MCF 10A (cell line): ENCODE measurements at regions of chr2 and their contacts with region 1.

Region 1: DNA sequence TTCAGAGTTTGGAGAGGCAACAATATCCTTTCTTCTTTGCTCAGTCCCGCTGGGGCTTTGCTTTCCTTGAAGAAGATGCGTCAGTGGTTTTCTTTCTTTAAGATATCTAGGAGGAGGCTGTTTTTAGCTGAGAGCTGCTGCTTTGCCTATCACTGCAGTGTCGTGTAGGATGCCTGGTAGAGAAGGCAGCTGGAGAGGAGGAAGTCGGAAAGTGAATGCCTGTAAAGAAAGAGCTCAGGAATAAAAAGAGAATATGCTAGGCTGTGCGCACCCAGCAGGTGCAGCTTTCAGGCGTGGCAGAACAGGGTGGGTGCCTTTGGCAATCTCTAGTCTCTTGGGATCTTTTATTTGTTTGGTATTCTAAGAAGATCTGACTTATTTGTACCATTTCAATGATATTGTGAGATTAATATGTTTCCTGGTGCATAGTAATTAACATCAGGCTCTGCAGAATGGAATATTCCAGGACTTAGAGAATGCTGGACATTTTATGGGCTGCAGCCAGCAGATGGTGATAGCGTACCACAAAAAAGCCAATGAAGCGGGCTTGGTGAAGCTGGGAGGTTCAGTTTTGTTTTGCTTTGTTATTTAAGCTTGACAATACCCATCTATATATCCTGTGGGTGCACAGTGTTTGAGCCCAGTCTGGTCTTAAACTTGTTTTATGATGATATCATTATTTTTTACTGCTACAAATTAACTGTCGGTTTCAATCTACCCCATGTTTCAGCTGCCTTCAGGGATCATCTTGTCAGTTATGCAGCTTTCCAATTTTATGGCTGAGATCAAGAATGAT is 34.9 kb downstream of the CAVIN2 start:
- DNase-seq: peak; percentile 72
- H3K4me3 Mint-ChIP-seq: no peak overlapping the region
- H3K27ac Mint-ChIP-seq: no peak overlapping the region
- H3K4me1 Mint-ChIP-seq: no peaks in the 10 kb centered on the region
- H3K27me3 Mint-ChIP-seq: no peaks in the 10 kb centered on the region
- CTCF ChIP-seq: peak; percentile 76

Region 2: DNA sequence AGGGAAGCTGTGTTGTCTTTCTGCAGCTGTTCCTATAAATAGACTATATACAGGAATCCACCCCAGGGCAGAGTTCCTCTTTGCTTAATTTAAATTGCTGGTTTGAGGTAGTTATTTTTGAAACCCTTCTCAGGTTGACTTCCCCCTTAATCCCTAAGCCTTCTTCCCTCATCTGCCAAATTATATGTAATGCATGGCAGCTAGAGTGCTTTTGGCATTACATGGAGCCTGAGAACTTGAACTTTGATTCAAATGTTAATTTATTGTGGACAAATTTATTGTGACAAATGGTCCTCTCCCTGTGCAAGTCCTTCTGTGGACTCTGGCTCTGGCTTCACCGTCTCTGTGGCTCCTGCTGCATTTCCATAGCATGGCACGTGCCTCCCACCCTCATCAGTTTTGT is 537.6 kb before region 1 on chr2:
- CTCF ChIA-PET with region 1: no interaction called
- POLR2A ChIA-PET with region 1: no interaction called
- intact Hi-C with region 1: no loop called
- DNase-seq: no peak
- H3K4me3 Mint-ChIP-seq: no peak overlapping the region
- H3K27ac Mint-ChIP-seq: peak overlapping the region; percentile 19
- H3K4me1 Mint-ChIP-seq: peaks cover 12% of the 10 kb centered on the region
- H3K27me3 Mint-ChIP-seq: no peaks in the 10 kb centered on the region
- CTCF ChIP-seq: no peak

Region 3: DNA sequence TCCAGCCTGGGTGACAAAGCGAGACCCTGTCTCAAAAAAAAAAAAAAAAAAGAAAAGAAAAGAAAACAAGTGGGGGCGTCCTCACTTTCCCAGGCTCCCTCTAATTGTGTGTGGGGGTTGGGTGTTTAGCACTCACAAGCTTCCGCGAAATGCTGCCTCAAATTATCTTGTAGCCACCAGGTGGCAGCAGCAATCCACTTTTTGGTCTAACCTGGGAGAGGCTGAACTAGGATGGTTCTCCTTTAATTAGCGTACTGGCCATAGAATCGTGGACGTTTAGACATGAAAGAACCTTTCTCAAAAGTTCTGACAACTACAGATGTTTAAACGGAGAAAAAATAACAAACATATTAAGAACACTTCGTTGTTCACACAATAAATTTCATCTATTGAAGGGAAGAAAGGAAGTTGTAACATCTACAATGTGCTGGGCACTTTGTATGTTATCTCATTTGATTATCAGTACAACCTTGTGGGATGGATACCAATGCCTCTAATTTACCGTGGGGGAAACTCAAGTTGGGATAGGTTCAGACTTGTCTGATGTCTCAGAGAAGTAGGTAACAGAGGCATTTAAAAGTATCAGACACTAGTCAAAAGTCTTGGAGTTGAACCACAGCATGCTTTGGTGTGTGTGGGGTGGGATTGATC is 256.8 kb before region 1 on chr2:
- CTCF ChIA-PET with region 1: interaction called, 45 read pairs
- POLR2A ChIA-PET with region 1: interaction called, 3 read pairs
- intact Hi-C with region 1: loop called (anchors 1 kb)
- DNase-seq: peak; percentile 89
- H3K4me3 Mint-ChIP-seq: no peak overlapping the region
- H3K27ac Mint-ChIP-seq: no peak overlapping the region
- H3K4me1 Mint-ChIP-seq: peaks cover 5% of the 10 kb centered on the region
- H3K27me3 Mint-ChIP-seq: no peaks in the 10 kb centered on the region
- CTCF ChIP-seq: peak; percentile 72

Region 4: DNA sequence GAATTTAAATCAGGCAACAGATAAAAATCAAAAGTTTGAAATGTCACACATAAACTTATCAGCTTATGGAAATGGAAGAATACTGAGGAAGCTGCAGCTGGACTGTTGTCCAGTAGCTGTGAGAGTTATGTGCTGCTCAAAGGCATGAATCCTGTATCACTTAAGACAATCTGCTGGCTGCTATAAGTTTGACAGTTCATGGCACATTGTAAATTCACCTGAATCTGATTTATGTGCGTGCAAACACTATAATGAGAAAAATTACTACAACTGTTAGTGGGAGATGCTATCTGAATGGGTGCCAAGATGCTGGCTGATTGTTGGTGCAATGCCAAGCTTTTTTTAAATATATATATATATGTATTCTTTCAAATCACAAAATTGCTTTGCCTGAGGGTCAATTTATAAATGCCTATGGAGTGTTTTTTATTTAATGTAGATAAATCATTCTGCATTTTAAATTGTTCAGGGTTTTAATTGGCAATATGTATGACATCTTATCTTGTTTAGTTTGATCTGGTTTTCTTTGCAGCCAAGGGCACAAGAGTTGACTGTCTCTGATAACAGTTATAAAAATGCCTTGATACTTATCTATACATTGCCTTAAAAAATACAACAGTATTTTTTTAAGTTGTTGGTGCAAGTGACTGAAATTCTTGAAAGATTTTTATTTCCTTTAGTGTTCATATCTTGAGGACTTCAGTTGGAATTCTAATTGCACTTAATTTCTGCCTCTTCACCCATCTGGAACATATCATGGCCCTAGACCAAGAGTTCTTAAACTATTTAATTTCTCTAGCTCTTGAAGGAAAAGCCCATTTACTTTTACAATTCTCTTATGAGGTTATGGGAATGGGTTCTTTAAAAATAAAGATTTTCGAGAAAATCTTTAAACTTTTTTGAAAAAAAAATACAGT is 13.8 kb before region 1 on chr2:
- CTCF ChIA-PET with region 1: interaction called, 18 read pairs
- POLR2A ChIA-PET with region 1: no interaction called
- intact Hi-C with region 1: no loop called
- DNase-seq: no peak
- H3K4me3 Mint-ChIP-seq: no peak overlapping the region
- H3K27ac Mint-ChIP-seq: no peak overlapping the region
- H3K4me1 Mint-ChIP-seq: no peaks in the 10 kb centered on the region
- H3K27me3 Mint-ChIP-seq: no peaks in the 10 kb centered on the region
- CTCF ChIP-seq: no peak

Region 5: DNA sequence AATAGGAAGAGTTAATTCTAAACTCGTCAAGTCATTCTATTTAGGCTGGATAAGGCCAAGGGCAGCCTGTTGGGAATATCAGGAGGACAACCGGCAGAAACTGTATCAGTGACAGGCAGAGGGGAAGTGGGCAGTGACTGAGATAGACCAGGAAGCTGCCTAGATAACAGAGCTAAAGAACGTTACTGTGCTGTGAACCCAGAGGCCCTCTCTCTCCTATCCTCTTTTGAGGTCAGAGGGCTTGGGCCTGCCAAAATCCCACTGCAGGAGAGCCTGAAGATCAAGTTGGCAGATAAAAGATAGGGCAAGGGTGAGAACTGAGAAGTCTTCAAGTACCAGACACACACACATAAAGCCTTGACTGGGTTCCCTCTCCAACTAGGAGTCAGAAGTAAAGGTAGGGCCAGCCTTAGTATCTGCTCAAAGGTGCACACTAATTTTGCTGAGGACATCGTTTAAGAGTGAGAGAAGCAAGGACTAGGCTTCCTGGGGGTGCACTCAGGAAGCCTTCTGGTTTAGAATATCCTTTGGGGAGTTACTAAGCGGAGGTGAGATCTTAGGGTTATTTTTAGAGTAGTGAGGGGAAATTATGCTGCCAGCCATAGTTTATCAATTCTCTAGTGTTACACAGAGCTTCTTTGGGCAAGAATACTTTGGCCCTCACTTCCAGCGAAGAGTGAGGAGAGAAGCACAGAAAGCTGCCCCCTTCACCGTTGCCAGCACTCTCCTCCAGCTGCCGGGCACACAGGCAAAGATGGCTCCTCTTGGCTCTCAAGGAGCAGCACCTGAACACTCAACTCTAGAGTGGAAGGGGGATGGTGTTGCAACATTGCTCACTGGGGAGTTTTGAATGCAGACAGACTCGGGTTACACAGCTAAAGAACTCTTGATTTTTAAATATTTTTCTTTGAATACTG is 25.1 kb after region 1 on chr2:
- CTCF ChIA-PET with region 1: interaction called, 22 read pairs
- POLR2A ChIA-PET with region 1: no interaction called
- intact Hi-C with region 1: no loop called
- DNase-seq: peak; percentile 29
- H3K4me3 Mint-ChIP-seq: no peak overlapping the region
- H3K27ac Mint-ChIP-seq: no peak overlapping the region
- H3K4me1 Mint-ChIP-seq: peaks cover 23% of the 10 kb centered on the region
- H3K27me3 Mint-ChIP-seq: no peaks in the 10 kb centered on the region
- CTCF ChIP-seq: no peak

Region 6: DNA sequence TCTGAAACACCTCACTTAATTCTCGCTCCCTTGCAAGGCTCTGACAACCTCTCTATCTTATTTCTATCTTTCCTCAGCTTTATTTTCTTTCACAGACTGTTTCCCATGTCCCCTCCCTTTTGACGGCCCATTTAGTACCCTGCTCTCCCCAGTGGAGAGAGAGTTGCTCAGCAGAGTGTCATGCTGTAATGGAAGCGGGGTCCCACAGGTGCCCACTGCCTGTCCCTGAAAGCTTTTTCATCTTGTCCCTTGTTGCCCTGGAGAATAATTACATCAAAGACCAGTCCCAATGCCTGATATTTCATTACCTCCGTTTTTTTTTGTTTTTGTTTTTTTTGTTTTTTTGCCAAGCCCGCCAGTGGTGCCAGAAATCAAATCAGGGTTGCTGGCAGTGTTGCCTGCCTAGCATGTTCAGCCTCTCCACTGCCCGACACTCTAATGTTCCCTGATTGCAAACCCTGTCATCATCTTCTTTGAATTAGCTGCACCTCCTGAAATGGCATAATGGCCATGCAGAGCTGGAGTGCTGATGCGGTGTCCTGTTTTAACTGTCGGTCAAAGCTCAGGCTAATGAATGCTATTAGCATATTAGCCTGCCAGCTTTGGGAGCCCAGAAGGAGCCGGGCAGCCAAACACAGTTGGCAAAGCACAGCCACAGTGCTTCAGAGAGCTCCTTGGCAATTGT is 106.1 kb after region 1 on chr2:
- CTCF ChIA-PET with region 1: no interaction called
- POLR2A ChIA-PET with region 1: no interaction called
- intact Hi-C with region 1: no loop called
- DNase-seq: no peak
- H3K4me3 Mint-ChIP-seq: no peak overlapping the region
- H3K27ac Mint-ChIP-seq: no peak overlapping the region
- H3K4me1 Mint-ChIP-seq: no peaks in the 10 kb centered on the region
- H3K27me3 Mint-ChIP-seq: no peaks in the 10 kb centered on the region
- CTCF ChIP-seq: no peak

Region 7: DNA sequence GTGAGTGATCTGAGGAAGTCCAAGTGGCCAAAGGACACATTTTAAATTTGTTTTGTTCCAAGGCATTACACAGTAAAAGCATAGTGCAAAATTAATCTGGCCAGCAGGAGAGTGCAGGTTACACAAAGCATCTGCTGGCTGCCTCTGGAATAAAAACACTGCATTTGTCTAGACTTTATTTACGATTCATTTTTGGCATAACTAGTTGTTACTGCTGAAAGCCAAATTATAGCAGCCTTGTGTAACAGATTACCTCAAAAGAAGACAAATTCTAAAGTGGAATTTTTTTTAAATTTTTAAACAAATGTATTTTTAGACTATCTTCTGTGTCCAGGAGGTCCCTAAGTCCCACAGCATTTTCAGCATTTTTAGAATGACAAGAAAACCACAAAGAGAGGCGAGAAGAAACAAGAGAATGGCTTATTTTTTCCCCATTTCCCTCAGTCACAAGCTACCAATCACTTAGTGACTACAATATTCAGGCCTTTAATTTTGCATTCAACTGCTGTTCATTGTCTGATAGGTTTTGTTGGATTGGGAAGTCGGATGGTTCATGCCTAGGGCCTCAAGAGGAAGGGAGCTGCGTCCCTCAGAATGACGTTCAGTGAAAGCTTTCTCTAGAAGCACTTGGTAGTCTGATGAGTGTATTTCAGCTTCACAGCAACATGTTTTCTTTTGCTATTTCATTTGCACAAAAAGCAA is 336.8 kb after region 1 on chr2:
- CTCF ChIA-PET with region 1: interaction called, 55 read pairs
- POLR2A ChIA-PET with region 1: interaction called, 4 read pairs
- intact Hi-C with region 1: no loop called
- DNase-seq: no peak
- H3K4me3 Mint-ChIP-seq: no peak overlapping the region
- H3K27ac Mint-ChIP-seq: no peak overlapping the region
- H3K4me1 Mint-ChIP-seq: peaks cover 9% of the 10 kb centered on the region
- H3K27me3 Mint-ChIP-seq: no peaks in the 10 kb centered on the region
- CTCF ChIP-seq: no peak

Region 8: DNA sequence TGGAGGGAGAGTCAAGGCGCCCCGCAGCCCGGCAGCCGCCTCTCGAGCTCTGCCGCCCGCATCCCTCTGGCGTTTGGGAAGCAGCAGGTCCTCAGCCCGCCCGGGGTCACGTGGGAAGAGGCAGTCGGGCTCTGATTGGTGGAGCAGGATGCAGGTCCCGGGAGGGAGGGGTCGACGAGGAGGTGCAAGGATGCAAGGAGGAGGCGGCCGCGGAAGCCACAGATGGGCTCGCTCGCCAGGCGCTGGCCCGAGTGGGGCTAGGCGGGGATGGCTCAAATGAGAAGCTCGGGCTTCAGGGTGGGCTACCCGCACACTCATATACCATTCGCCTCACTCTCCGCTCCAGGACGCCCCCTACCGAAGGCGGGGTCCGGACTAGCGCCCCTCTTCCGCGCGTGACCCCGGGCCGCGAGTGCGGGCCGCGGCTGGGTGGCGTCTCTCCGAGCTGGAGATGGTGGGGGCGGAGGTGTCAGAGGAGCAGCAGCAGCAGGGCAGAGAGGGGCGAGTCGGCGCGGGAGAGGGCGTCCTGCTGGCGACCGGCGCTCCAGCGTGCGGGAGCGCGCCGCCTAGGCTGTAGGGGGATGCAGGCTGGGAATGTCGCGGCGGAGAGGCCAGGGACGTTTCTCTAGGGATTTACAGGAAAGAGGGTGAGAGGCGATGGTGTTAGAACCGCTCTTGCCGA is 383.0 kb after region 1 on chr2 and contains the start of gene TMEFF2:
- CTCF ChIA-PET with region 1: interaction called, 7 read pairs
- POLR2A ChIA-PET with region 1: interaction called, 3 read pairs
- intact Hi-C with region 1: loop called (anchors 1 kb)
- DNase-seq: peak; percentile 45
- H3K4me3 Mint-ChIP-seq: peak within 1 kb of the TSS; percentile 86
- H3K27ac Mint-ChIP-seq: no peak within 1 kb of the TSS
- H3K4me1 Mint-ChIP-seq: peaks cover 15% of the 10 kb centered on the region
- H3K27me3 Mint-ChIP-seq: peaks cover 41% of the 10 kb centered on the region
- CTCF ChIP-seq: peak; percentile 26
- total RNA-seq, gene TMEFF2: not detected in 2 replicates

Region 9: DNA sequence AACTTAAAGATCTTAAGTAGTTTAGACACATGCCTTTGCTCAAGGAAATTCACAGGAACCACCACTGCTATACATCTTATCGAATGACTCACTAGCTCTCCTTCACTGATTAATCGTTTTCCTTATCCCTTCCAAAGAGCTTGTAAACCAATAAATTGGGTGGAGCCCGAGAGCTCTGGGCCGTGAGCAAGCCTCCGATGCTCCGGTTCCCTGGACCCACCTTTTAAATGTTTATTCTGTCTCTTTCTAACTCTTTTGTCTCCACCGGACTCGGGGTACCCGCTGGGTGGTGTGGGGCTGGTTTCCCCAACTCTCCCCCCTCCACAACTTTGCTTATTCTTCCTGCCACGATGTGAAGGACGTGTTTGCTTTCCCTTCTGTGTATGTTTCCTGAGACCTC is 675.6 kb after region 1 on chr2:
- CTCF ChIA-PET with region 1: no interaction called
- POLR2A ChIA-PET with region 1: no interaction called
- intact Hi-C with region 1: no loop called
- DNase-seq: no peak
- H3K4me3 Mint-ChIP-seq: no peak overlapping the region
- H3K27ac Mint-ChIP-seq: no peak overlapping the region
- H3K4me1 Mint-ChIP-seq: no peaks in the 10 kb centered on the region
- H3K27me3 Mint-ChIP-seq: no peaks in the 10 kb centered on the region
- CTCF ChIP-seq: no peak